Activated CD8-positive, alpha-beta T cell treated with anti-CD3 and anti-CD28 coated beads for 36 hours (primary cell): ENCODE measurements at regions of chr21 and their contacts with region 1.

Region 1: GRCh38 chr21:38775733-38776132 is 30.0 kb upstream of the ETS2 start:
- DNase-seq: no peak
- ATAC-seq: no peak
- H3K4me3 Mint-ChIP-seq: no peak overlapping the region
- H3K27ac Mint-ChIP-seq: no peak overlapping the region
- H3K4me1 Mint-ChIP-seq: peaks cover 57% of the 10 kb centered on the region
- H3K27me3 Mint-ChIP-seq: peaks cover 10% of the 10 kb centered on the region
- CTCF ChIP-seq: no peak

Region 2: DNA sequence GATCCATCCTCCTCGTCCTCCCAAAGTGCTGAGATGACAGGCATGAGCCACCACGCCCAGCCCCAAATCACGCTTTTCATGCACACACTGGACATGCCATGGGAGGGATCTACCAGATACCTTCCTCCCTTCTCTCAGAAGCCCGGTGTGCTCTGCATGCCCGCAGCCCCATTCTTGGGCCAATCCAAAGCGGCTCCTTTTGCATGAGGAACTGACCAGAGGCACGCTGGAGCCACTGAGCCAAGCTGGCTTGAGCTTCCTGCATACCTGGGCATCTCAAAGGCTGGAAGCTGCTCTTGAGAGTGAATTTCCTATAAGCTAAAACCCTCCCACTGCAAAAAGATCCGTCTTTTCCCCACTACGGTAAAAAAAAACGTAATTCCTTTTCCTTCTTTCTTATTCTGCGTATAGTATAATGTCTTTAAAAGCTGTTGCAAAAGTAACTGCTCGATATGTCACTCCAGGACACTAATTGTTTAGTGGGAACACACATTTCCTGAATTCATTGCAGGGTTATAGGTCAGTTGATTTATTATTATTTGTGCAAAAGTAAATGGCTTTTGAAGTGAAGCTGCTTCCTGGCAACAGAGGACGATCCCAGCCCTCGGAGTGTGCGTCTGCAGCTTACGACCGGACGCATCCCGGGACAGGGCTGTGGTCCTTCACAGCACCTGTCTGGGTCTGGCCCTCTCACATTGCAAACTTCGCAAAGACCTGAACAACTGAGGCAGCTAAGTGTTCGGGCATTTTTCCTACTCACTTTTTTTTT is 31.8 kb before region 1 on chr21:
- CTCF ChIA-PET with region 1: no interaction called
- POLR2A ChIA-PET with region 1: no interaction called
- intact Hi-C with region 1: no loop called
- DNase-seq: no peak
- ATAC-seq: no peak
- H3K4me3 Mint-ChIP-seq: no peak overlapping the region
- H3K27ac Mint-ChIP-seq: no peak overlapping the region
- H3K4me1 Mint-ChIP-seq: peaks cover 11% of the 10 kb centered on the region
- H3K27me3 Mint-ChIP-seq: peaks cover 2% of the 10 kb centered on the region
- CTCF ChIP-seq: no peak

Region 3: GRCh38 chr21:38785901-38786300 is 10.2 kb after region 1 on chr21:
- CTCF ChIA-PET with region 1: interaction called, 5 read pairs
- POLR2A ChIA-PET with region 1: no interaction called
- intact Hi-C with region 1: loop called (anchors 1 kb)
- DNase-seq: no peak
- ATAC-seq: no peak
- H3K4me3 Mint-ChIP-seq: no peak overlapping the region
- H3K27ac Mint-ChIP-seq: no peak overlapping the region
- H3K4me1 Mint-ChIP-seq: peaks cover 4% of the 10 kb centered on the region
- H3K27me3 Mint-ChIP-seq: no peaks in the 10 kb centered on the region
- CTCF ChIP-seq: no peak